Dorsolateral prefrontal cortex (tissue), 120 donors: ENCODE measurements at regions of chr7 and their contacts with region 1.

Region 1: GRCh38 chr7:2354186-2354938 is at the start of gene EIF3B:
- DNase-seq: peak; percentile 73 to 89 (median 81)
- H3K4me3 ChIP-seq: peak within 1 kb of the TSS; percentile 72 to 100 (median 96)
- H3K27ac ChIP-seq: peak within 1 kb of the TSS; percentile 99 to 100 (median 100)
- H3K27me3 ChIP-seq: no peaks in the 10 kb centered on the region
- CTCF ChIP-seq: peak in 5 of 56 donors; percentile 2 to 18 (median 5)
- total RNA-seq, gene EIF3B: 59.7 to 91.4 (median 71.8) TPM

Region 2: DNA sequence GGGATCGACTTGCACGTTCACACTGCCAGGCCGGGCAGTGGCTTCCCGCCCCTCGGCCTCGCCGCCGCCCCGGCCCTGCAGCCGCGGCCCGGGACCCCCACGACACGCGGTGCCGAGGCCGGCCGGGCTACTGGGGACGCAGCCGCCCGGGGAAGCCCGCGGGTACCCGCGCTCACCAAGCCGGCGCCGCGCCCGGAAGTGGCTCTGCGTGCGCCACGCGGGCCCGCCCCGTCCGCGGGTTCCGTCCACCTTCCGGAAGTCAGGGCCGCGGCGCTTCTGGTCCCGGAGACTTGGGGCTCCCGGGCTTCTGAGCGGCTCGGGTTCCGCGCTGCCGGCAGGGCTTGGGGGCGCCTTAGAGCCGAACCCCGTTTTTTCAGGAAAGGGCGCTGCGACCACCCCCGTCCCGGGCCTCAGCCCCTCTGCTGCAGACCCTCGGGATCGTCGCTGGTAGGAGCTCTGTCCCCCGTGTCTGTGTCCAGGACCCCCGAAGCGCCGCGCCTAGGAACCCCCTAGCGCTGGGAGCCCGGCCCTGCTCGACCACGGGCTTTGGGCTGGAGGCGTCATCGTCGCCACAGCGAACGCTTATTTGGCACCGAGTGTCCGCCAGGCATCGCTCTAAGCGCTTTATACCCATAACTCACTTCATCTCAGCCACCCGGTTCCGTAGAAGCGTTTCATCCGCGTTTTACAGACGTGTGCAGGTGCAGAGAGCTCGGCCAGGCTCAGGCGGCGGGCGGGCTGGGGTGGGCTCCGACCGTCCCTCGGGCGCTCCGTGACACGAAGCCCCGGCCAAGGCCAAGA is 784.3 kb before region 1 on chr7 and contains the start of gene PSMG3:
- intact Hi-C with region 1: loop called in 1 of 2 experiments (anchors 10 kb)
- DNase-seq: peak; percentile 71 to 95 (median 90)
- H3K4me3 ChIP-seq: peak within 1 kb of the TSS; percentile 60 to 98 (median 91)
- H3K27ac ChIP-seq: peak within 1 kb of the TSS; percentile 42 to 98 (median 93)
- H3K27me3 ChIP-seq: no peaks in the 10 kb centered on the region
- CTCF ChIP-seq: peak in 48 of 56 donors; percentile 2 to 58 (median 36)
- total RNA-seq, gene PSMG3: 14.7 to 44.6 (median 28.9) TPM

Region 3: GRCh38 chr7:1579481-1580421 is 774.6 kb before region 1 on chr7:
- intact Hi-C with region 1: loop called (anchors 2 to 10 kb)
- DNase-seq: peak in 9 of 10 donors; percentile 62 to 85 (median 75)
- H3K4me3 ChIP-seq: peak overlapping the region in 2 of 59 donors; percentile 12 to 14
- H3K27ac ChIP-seq: no peak overlapping the region
- H3K27me3 ChIP-seq: no peaks in the 10 kb centered on the region
- CTCF ChIP-seq: peak in 55 of 56 donors; percentile 36 to 89 (median 81)

Region 4: GRCh38 chr7:2241580-2242540 is 112.5 kb before region 1 on chr7 and contains the starts of genes MRM2 and NUDT1:
- intact Hi-C with region 1: loop called (anchors 5 kb)
- DNase-seq: peak; percentile 71 to 91 (median 81)
- H3K4me3 ChIP-seq: peak within 1 kb of the TSS; percentile 57 to 100 (median 94)
- H3K27ac ChIP-seq: peak within 1 kb of the TSS in 39 of 59 donors; percentile 10 to 84 (median 54)
- H3K27me3 ChIP-seq: no peaks in the 10 kb centered on the region
- CTCF ChIP-seq: peak in 13 of 56 donors; percentile 9 to 42 (median 18)
- total RNA-seq, gene MRM2: 12.1 to 24.5 (median 18.5) TPM
- total RNA-seq, gene NUDT1: 2.3 to 17.6 (median 9.9) TPM

Region 5: GRCh38 chr7:2281541-2281940 is 72.8 kb before region 1 on chr7:
- intact Hi-C with region 1: no loop called
- DNase-seq: peak in 2 of 10 donors; percentile 33 to 80
- H3K4me3 ChIP-seq: peak overlapping the region in 1 of 59 donors; percentile 3
- H3K27ac ChIP-seq: peak overlapping the region in 5 of 59 donors; percentile 8 to 73 (median 26)
- H3K27me3 ChIP-seq: no peaks in the 10 kb centered on the region
- CTCF ChIP-seq: no peak

Region 6: GRCh38 chr7:2314209-2314955 is 40.0 kb before region 1 on chr7 and contains the start of gene SNX8:
- intact Hi-C with region 1: loop called (anchors 2 to 5 kb)
- DNase-seq: peak; percentile 81 to 95 (median 86)
- H3K4me3 ChIP-seq: peak within 1 kb of the TSS; percentile 62 to 99 (median 90)
- H3K27ac ChIP-seq: peak within 1 kb of the TSS in 54 of 59 donors; percentile 4 to 90 (median 70)
- H3K27me3 ChIP-seq: no peaks in the 10 kb centered on the region
- CTCF ChIP-seq: peak in 7 of 56 donors; percentile 8 to 33 (median 16)
- total RNA-seq, gene SNX8: 18.8 to 54.8 (median 30.8) TPM

Region 7: DNA sequence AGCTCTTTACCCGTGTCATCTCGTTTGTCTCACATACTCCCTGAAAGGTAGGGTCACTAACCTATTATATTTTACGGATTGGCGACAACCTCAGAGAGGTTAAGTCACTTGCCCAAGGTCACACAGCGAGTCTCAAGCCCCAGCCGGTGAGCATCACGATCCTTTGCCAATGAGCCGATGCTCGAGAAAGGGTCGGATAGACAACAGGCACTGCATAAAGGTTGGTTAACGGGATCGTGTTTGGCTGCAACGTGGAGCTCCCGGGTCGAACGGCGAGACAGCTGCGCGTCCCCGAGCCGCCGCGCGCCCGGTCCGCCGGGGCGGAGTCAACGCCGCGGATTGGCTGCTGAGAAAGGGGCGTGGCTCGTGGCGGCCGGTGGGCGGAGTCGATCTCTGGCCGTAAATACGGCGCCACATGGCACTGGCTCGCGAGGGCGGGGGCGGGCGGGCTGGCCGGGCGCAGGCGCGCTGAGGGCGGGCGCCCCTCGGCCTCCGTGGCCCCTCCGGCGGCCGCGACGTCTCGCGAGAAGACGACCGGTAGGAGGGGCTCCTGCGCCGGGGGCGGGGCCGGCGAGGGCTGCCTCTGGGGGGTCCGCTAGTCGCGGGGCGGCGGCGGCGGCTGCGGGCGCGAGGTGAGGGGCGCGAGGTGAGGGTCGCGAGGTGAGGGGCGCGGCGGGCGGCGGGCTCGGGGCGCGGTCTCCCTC is 48.8 kb after region 1 on chr7 and contains the start of gene CHST12:
- intact Hi-C with region 1: loop called (anchors 2 kb)
- DNase-seq: peak; percentile 88 to 97 (median 94)
- H3K4me3 ChIP-seq: peak within 1 kb of the TSS; percentile 69 to 99 (median 89)
- H3K27ac ChIP-seq: peak within 1 kb of the TSS in 51 of 59 donors; percentile 2 to 88 (median 69)
- H3K27me3 ChIP-seq: no peaks in the 10 kb centered on the region
- CTCF ChIP-seq: peak in 9 of 56 donors; percentile 5 to 41 (median 19)
- total RNA-seq, gene CHST12: 19.5 to 66.3 (median 29.6) TPM

Region 8: GRCh38 chr7:2487586-2488271 is 133.4 kb after region 1 on chr7:
- intact Hi-C with region 1: no loop called
- DNase-seq: no peak
- H3K4me3 ChIP-seq: no peak overlapping the region
- H3K27ac ChIP-seq: no peak overlapping the region
- H3K27me3 ChIP-seq: no peaks in the 10 kb centered on the region
- CTCF ChIP-seq: no peak

Region 9: DNA sequence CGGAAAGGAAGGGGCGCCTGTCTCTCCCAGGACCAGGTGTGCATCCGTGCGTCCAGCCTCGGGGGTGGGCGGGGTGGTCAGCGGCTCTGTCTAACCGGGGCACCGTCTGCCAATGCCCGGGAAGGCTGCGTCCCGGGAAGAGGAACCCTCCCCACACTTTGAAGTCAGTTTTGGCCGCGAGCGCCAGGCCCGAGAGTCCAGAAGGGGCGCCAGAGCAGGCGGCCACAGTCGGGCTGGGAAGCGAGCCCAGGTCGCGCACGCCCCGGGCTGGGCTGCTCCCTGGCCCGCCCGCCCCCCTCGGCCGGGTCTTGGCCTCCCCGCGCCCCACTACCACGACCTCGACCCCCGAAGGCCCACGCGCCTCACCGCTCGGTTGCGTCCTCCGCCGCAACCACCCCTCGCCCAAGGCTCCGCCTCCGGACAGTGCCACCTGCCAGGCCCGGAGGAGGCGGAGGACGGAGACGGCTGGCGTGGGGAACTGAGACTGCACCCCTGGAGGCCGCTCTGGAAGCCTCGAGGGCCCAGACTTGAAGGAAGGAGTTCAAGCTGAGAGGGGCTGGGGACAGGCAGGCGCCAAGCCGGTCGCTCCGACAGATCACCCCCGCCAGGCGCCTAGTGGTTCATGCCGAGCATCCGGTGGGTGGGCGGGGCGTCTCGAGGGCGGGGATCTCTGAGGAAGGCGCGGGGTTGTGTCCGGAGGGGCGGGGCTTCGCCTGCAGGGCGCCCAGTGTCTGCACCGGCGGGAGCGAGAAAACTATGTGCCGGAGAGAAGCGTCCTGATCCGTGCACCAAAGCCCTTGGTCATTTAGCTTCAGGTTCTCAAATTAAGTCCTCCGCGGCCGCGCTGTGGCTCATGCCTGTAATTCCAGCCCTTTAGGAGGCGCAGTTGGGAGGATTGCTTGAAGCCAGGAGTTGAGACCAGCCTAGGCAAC is 201.0 kb after region 1 on chr7 and contains the start of gene BRAT1:
- intact Hi-C with region 1: loop called in 1 of 2 experiments (anchors 5 kb)
- DNase-seq: peak; percentile 92 to 98 (median 96)
- H3K4me3 ChIP-seq: peak within 1 kb of the TSS; percentile 67 to 96 (median 90)
- H3K27ac ChIP-seq: peak within 1 kb of the TSS; percentile 89 to 100 (median 99)
- H3K27me3 ChIP-seq: no peaks in the 10 kb centered on the region
- CTCF ChIP-seq: peak in 41 of 56 donors; percentile 4 to 63 (median 30)
- total RNA-seq, gene BRAT1: 16.7 to 38.4 (median 24.9) TPM